Aorta (tissue), 5 donors: ENCODE measurements at regions of chr3 and their contacts with region 1.

Region 1: DNA sequence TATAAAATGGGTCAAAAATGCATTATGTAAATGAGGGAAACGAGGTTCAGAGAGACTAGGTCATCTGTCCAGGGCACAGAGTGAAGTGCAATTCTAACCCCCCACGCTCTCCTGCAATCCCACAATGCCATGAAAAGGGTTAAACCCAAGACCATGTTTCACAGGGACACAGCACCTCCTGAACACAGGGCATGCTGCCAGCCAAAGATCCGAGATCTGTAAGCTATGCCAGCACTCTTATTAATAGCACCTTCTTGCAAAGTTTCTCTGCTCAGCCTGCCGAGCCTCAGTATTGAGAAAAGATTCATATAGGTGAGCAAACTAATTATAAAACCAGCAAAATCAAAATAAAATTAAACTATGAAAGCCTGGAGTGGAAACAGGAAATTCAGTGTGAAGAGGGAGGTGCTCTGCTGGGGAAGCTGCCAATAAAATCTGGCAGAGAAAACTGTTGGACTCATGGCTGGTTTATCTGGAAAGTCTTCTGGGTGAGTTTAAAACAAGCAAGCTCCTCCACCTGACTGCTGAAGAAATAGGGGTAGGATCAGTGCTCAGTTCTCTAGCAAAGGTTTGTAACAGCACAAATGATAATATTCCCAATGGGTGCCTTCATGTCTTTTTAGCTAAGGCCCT is 50.3 kb downstream of the LRIG1 start:
- DNase-seq: peak in 1 of 2 donors; percentile 64
- ATAC-seq: peak; percentile 70
- H3K4me3 ChIP-seq: no peak overlapping the region
- H3K27ac ChIP-seq: peak overlapping the region in 1 of 2 donors; percentile 50
- H3K4me1 ChIP-seq: peaks cover 11 to 12% of the 10 kb centered on the region in 2 donors
- H3K27me3 ChIP-seq: no peaks in the 10 kb centered on the region

Region 2: GRCh38 chr3:66418475-66418931 is 32.0 kb before region 1 on chr3:
- intact Hi-C with region 1: loop called in 1 of 2 experiments (anchors 5 kb)
- DNase-seq: peak; percentile 78 to 83
- ATAC-seq: peak; percentile 80
- H3K4me3 ChIP-seq: no peak overlapping the region
- H3K27ac ChIP-seq: peak overlapping the region; percentile 6 to 16
- H3K4me1 ChIP-seq: peaks cover 0 to 5% of the 10 kb centered on the region in 2 donors
- H3K27me3 ChIP-seq: no peaks in the 10 kb centered on the region

Region 3: GRCh38 chr3:66485291-66485968 is 34.9 kb after region 1 on chr3:
- intact Hi-C with region 1: loop called (anchors 5 to 10 kb)
- DNase-seq: no peak
- ATAC-seq: peak; percentile 40
- H3K4me3 ChIP-seq: no peak overlapping the region
- H3K27ac ChIP-seq: peak overlapping the region; percentile 96 to 99
- H3K4me1 ChIP-seq: peaks cover 11 to 20% of the 10 kb centered on the region in 2 donors
- H3K27me3 ChIP-seq: no peaks in the 10 kb centered on the region